Endothelial cell of umbilical vein (primary cell): ENCODE measurements at regions of chr16 and their contacts with region 1.

Region 1: DNA sequence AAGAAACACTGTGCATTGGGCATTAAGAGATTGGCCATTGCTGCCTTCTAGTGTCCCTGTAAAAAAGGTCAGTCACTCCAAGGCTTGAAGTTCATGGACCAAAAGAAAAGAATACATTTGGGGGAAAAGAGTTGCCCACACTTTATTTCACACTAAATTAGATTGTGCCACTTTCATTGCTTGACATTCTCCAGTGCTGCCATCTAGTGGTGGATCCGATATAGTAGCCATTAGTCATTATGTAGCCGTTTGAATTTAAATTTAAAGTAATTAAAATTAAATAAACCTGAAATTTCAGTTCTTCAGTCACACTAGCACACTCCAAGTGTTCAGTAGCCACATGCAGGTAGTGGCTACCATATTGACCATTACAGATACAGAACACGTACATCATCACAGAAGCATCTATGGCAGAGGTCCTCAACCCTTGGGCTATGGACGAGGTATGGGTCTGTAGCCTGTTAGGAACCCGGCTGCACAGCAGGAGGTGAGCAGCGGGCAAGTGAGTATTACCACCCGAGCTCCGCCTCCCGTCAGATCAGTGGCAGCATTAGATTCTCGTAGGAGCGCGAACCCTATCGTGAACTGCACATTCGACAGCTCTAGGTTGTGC is 21.9 kb upstream of the CDH5 start:
- DNase-seq: peak; percentile 52
- H3K4me3 ChIP-seq: no peak overlapping the region
- H3K27ac ChIP-seq: no peak overlapping the region
- H3K4me1 ChIP-seq: no peaks in the 10 kb centered on the region
- H3K27me3 ChIP-seq: peaks cover 0 to 2% of the 10 kb centered on the region in 2 experiments
- CTCF ChIP-seq: peak; percentile 59 to 65
- POLR2A ChIP-seq: no peak

Region 2: GRCh38 chr16:66315210-66315825 is 29.3 kb before region 1 on chr16:
- CTCF ChIA-PET with region 1: interaction called, 12 read pairs
- POLR2A ChIA-PET with region 1: no interaction called
- dilution Hi-C with region 1: no loop called
- intact Hi-C with region 1: no loop called
- DNase-seq: peak; percentile 73
- H3K4me3 ChIP-seq: no peak overlapping the region
- H3K27ac ChIP-seq: no peak overlapping the region
- H3K4me1 ChIP-seq: no peaks in the 10 kb centered on the region
- H3K27me3 ChIP-seq: no peaks in the 10 kb centered on the region
- CTCF ChIP-seq: peak; percentile 93 to 96
- POLR2A ChIP-seq: no peak